ENCODE measurements at regions of chr13 and their contacts with region 1.

Region 1: GRCh38 chr13:98653463-98653985 is 76.6 kb upstream of the STK24 start:
- DNase-seq: peak; percentile 49 to 76 (median 53)
- H3K4me3 ChIP-seq: no peak overlapping the region
- H3K4me3 Mint-ChIP-seq: peak overlapping the region in 6 of 7 donors; percentile 44 to 82 (median 68)
- H3K27ac ChIP-seq: no peak overlapping the region
- H3K27ac Mint-ChIP-seq: peak overlapping the region in 2 of 8 donors; percentile 27 to 61
- H3K4me1 ChIP-seq: no peaks in the 10 kb centered on the region
- H3K4me1 Mint-ChIP-seq: peaks cover 2 to 6% (median 5%) of the 10 kb centered on the region in 3 donors
- H3K27me3 ChIP-seq: no peaks in the 10 kb centered on the region
- H3K27me3 Mint-ChIP-seq: peaks cover 0 to 14% of the 10 kb centered on the region in 2 donors

Region 2: DNA sequence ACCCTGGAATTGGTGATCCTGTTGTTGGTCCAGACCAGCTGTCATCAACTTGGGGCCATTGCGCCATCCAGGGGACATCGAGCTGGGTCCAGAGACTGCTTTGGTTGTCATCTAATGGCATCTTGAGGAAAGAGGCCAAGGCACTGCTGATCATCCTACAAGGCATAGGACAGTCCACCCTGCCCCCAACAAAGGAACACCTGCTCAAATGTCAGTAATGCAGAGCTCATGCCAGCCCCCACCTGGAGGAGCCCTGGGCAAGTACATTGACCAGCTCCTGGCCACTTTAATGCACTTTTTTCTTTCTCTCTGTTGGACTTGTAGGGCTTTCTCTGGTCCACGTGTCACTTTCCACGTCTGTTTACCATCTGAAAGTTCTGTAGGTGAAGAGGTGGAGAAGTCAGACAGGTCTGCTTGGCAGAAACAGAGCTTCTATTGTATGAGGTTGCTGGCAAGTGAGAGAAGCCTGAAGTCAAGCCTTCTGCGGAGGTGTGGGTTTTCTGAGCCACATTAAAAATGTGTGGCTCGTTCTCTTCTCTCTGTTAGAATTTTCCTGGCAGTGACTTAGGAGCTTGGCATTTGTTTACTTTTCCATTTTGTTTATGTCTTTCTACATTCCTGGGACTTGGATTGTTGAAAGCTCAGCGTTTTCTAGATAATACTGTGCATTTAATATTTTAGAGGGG is 352.4 kb before region 1 on chr13:
- CTCF ChIA-PET with region 1: no interaction called
- POLR2A ChIA-PET with region 1: no interaction called
- DNase-seq: no peak
- H3K4me3 ChIP-seq: no peak overlapping the region
- H3K4me3 Mint-ChIP-seq: no peak overlapping the region
- H3K27ac ChIP-seq: no peak overlapping the region
- H3K27ac Mint-ChIP-seq: no peak overlapping the region
- H3K4me1 ChIP-seq: no peaks in the 10 kb centered on the region
- H3K4me1 Mint-ChIP-seq: no peaks in the 10 kb centered on the region
- H3K27me3 ChIP-seq: no peaks in the 10 kb centered on the region
- H3K27me3 Mint-ChIP-seq: peaks cover 0 to 6% of the 10 kb centered on the region in 2 donors

Region 3: GRCh38 chr13:98451676-98452470 is 201.7 kb before region 1 on chr13:
- CTCF ChIA-PET with region 1: interaction called, 151 read pairs
- POLR2A ChIA-PET with region 1: no interaction called
- DNase-seq: no peak
- H3K4me3 ChIP-seq: no peak overlapping the region
- H3K4me3 Mint-ChIP-seq: no peak overlapping the region
- H3K27ac ChIP-seq: no peak overlapping the region
- H3K27ac Mint-ChIP-seq: peak overlapping the region; percentile 19 to 85 (median 56)
- H3K4me1 ChIP-seq: no peaks in the 10 kb centered on the region
- H3K4me1 Mint-ChIP-seq: peaks cover 16 to 20% (median 18%) of the 10 kb centered on the region in 3 donors
- H3K27me3 ChIP-seq: no peaks in the 10 kb centered on the region
- H3K27me3 Mint-ChIP-seq: no peaks in the 10 kb centered on the region

Region 4: GRCh38 chr13:98476538-98476966 is 177.0 kb before region 1 on chr13:
- CTCF ChIA-PET with region 1: interaction called, 15 read pairs
- POLR2A ChIA-PET with region 1: no interaction called
- DNase-seq: peak; percentile 76 to 93 (median 82)
- H3K4me3 ChIP-seq: peak overlapping the region; percentile 40
- H3K4me3 Mint-ChIP-seq: peak overlapping the region; percentile 28 to 85 (median 59)
- H3K27ac ChIP-seq: peak overlapping the region; percentile 21
- H3K27ac Mint-ChIP-seq: peak overlapping the region; percentile 90 to 99 (median 96)
- H3K4me1 ChIP-seq: peaks cover 55% of the 10 kb centered on the region
- H3K4me1 Mint-ChIP-seq: peaks cover 64 to 83% (median 65%) of the 10 kb centered on the region in 3 donors
- H3K27me3 ChIP-seq: no peaks in the 10 kb centered on the region
- H3K27me3 Mint-ChIP-seq: peaks cover 0 to 3% of the 10 kb centered on the region in 2 donors

Region 5: GRCh38 chr13:98484289-98485219 is 169.0 kb before region 1 on chr13:
- CTCF ChIA-PET with region 1: interaction called, 13 read pairs
- POLR2A ChIA-PET with region 1: no interaction called
- DNase-seq: peak in 4 of 5 donors; percentile 49 to 79 (median 66)
- H3K4me3 ChIP-seq: no peak overlapping the region
- H3K4me3 Mint-ChIP-seq: peak overlapping the region; percentile 61 to 87 (median 75)
- H3K27ac ChIP-seq: peak overlapping the region; percentile 8
- H3K27ac Mint-ChIP-seq: peak overlapping the region; percentile 92 to 100 (median 98)
- H3K4me1 ChIP-seq: peaks cover 45% of the 10 kb centered on the region
- H3K4me1 Mint-ChIP-seq: peaks cover 74 to 94% (median 83%) of the 10 kb centered on the region in 3 donors
- H3K27me3 ChIP-seq: no peaks in the 10 kb centered on the region
- H3K27me3 Mint-ChIP-seq: no peaks in the 10 kb centered on the region

Region 6: DNA sequence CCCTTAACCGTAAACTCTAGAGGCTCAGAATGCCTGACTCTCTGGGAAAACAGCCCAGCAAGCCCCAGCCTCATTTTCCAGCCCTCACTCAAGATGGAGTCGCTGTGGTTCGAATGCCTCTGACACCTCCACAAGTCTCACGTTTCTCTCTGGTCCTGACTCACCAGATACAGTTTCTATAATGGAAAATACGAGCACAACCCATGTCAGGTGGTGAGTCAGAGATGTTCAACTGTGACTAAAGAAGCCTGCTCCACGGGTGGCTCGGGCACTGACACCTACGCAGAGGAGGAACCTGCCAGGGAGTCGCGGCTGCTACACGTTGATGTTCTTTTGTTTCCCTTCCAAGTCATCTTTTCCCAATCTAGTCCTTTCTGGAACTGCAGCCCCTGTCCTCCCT is 10.5 kb after region 1 on chr13:
- CTCF ChIA-PET with region 1: interaction called, 12 read pairs
- POLR2A ChIA-PET with region 1: no interaction called
- DNase-seq: no peak
- H3K4me3 ChIP-seq: no peak overlapping the region
- H3K4me3 Mint-ChIP-seq: peak overlapping the region in 1 of 7 donors; percentile 28
- H3K27ac ChIP-seq: no peak overlapping the region
- H3K27ac Mint-ChIP-seq: no peak overlapping the region
- H3K4me1 ChIP-seq: no peaks in the 10 kb centered on the region
- H3K4me1 Mint-ChIP-seq: peaks cover 3 to 7% (median 6%) of the 10 kb centered on the region in 3 donors
- H3K27me3 ChIP-seq: no peaks in the 10 kb centered on the region
- H3K27me3 Mint-ChIP-seq: peaks cover 4 to 11% of the 10 kb centered on the region in 2 donors

Region 7: GRCh38 chr13:98810746-98811145 is 157.2 kb after region 1 on chr13:
- CTCF ChIA-PET with region 1: no interaction called
- POLR2A ChIA-PET with region 1: no interaction called
- DNase-seq: no peak
- H3K4me3 ChIP-seq: no peak overlapping the region
- H3K4me3 Mint-ChIP-seq: no peak overlapping the region
- H3K27ac ChIP-seq: no peak overlapping the region
- H3K27ac Mint-ChIP-seq: no peak overlapping the region
- H3K4me1 ChIP-seq: no peaks in the 10 kb centered on the region
- H3K4me1 Mint-ChIP-seq: peaks cover 0 to 2% (median 0%) of the 10 kb centered on the region in 3 donors
- H3K27me3 ChIP-seq: no peaks in the 10 kb centered on the region
- H3K27me3 Mint-ChIP-seq: no peaks in the 10 kb centered on the region

Measured in CD8-positive, alpha-beta memory T cell (primary cell).